ENCODE measurements at regions of chr1 and their contacts with region 1.

Region 1: GRCh38 chr1:29711582-29712283 is 475.4 kb downstream of the PTPRU start:
- DNase-seq: peak; percentile 79
- H3K4me3 Mint-ChIP-seq: no peak overlapping the region
- H3K27ac Mint-ChIP-seq: peak overlapping the region; percentile 34
- H3K4me1 Mint-ChIP-seq: peaks cover 30% of the 10 kb centered on the region
- H3K27me3 Mint-ChIP-seq: peaks cover 19% of the 10 kb centered on the region

Region 2: GRCh38 chr1:29519788-29520110 is 192.0 kb before region 1 on chr1:
- CTCF ChIA-PET with region 1: no interaction called
- POLR2A ChIA-PET with region 1: no interaction called
- intact Hi-C with region 1: no loop called
- DNase-seq: no peak
- H3K4me3 Mint-ChIP-seq: no peak overlapping the region
- H3K27ac Mint-ChIP-seq: no peak overlapping the region
- H3K4me1 Mint-ChIP-seq: no peaks in the 10 kb centered on the region
- H3K27me3 Mint-ChIP-seq: peaks cover 15% of the 10 kb centered on the region

Region 3: GRCh38 chr1:29655945-29656850 is 55.5 kb before region 1 on chr1:
- CTCF ChIA-PET with region 1: no interaction called
- POLR2A ChIA-PET with region 1: no interaction called
- intact Hi-C with region 1: no loop called
- DNase-seq: no peak
- H3K4me3 Mint-ChIP-seq: no peak overlapping the region
- H3K27ac Mint-ChIP-seq: no peak overlapping the region
- H3K4me1 Mint-ChIP-seq: no peaks in the 10 kb centered on the region
- H3K27me3 Mint-ChIP-seq: peaks cover 5% of the 10 kb centered on the region

Region 4: DNA sequence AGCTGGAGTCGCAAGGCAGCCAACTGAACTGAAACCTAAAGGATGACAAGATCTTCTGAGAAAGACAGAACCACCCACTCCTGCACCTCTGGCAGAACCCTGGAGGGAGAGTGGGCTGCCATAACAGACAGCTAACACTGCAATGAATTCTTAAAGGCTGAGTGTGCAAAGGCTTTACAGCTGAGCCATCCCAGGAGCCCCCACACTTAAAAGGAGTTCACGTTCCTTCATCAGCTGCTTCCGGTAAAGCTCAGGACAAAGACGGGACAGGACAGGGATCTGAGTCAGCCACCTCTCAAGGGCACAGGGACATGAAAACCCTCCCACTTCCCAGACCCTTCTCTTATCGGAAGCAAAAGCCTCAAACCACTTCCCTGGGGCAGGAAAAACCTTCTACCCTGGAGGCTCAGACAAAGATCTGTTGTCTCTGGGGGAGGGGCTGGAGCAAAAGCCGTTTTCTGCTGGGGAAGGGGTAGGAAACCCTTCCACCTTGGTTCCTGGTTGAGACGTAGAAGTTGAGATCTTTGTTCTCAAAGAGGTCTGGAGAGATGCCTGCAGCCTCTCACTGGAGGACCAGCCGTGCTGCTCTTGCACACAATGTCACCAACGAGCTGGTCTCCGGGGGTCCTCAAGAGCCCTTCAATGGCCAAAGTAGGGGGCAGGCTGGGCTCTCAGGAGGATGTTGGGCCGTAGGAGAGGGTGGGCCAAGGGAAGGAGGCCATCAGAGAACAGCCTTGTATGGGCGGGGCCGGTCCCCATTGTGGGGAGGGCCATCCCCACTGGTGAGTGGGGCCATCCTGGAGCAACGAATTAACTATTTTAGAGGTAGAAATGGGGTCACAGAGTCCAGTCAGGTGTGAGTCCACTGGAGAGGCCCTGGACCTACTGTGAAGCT is 23.0 kb before region 1 on chr1:
- CTCF ChIA-PET with region 1: interaction called, 5 read pairs
- POLR2A ChIA-PET with region 1: interaction called, 3 read pairs
- intact Hi-C with region 1: loop called (anchors 1 kb)
- DNase-seq: peak; percentile 62
- H3K4me3 Mint-ChIP-seq: no peak overlapping the region
- H3K27ac Mint-ChIP-seq: peak overlapping the region; percentile 28
- H3K4me1 Mint-ChIP-seq: peaks cover 15% of the 10 kb centered on the region
- H3K27me3 Mint-ChIP-seq: peaks cover 25% of the 10 kb centered on the region

Measured in activated CD4-positive, alpha-beta memory T cell treated with anti-CD3 and anti-CD28 coated beads for 36 hours (primary cell).